Activated CD8-positive, alpha-beta T cell treated with anti-CD3 and anti-CD28 coated beads for 36 hours (primary cell): ENCODE measurements at regions of chr4 and their contacts with region 1.

Region 1: GRCh38 chr4:54233277-54233696 is 4.2 kb downstream of the PDGFRA start:
- DNase-seq: peak; percentile 83
- ATAC-seq: peak; percentile 87
- H3K4me3 Mint-ChIP-seq: peak overlapping the region; percentile 66
- H3K27ac Mint-ChIP-seq: no peak overlapping the region
- H3K4me1 Mint-ChIP-seq: peaks cover 21% of the 10 kb centered on the region
- H3K27me3 Mint-ChIP-seq: peaks cover 51% of the 10 kb centered on the region
- CTCF ChIP-seq: peak; percentile 68

Region 2: GRCh38 chr4:52376132-52376704 is 1857.1 kb before region 1 on chr4:
- CTCF ChIA-PET with region 1: interaction called, 5 read pairs
- POLR2A ChIA-PET with region 1: no interaction called
- intact Hi-C with region 1: loop called (anchors 10 kb)
- DNase-seq: peak; percentile 30
- ATAC-seq: no peak
- H3K4me3 Mint-ChIP-seq: no peak overlapping the region
- H3K27ac Mint-ChIP-seq: no peak overlapping the region
- H3K4me1 Mint-ChIP-seq: no peaks in the 10 kb centered on the region
- H3K27me3 Mint-ChIP-seq: peaks cover 7% of the 10 kb centered on the region
- CTCF ChIP-seq: peak; percentile 87

Region 3: GRCh38 chr4:53196882-53197771 is 1036.2 kb before region 1 on chr4:
- CTCF ChIA-PET with region 1: interaction called, 16 read pairs
- POLR2A ChIA-PET with region 1: no interaction called
- intact Hi-C with region 1: loop called (anchors 10 kb)
- DNase-seq: no peak
- ATAC-seq: no peak
- H3K4me3 Mint-ChIP-seq: no peak overlapping the region
- H3K27ac Mint-ChIP-seq: no peak overlapping the region
- H3K4me1 Mint-ChIP-seq: no peaks in the 10 kb centered on the region
- H3K27me3 Mint-ChIP-seq: no peaks in the 10 kb centered on the region
- CTCF ChIP-seq: peak; percentile 83

Region 4: DNA sequence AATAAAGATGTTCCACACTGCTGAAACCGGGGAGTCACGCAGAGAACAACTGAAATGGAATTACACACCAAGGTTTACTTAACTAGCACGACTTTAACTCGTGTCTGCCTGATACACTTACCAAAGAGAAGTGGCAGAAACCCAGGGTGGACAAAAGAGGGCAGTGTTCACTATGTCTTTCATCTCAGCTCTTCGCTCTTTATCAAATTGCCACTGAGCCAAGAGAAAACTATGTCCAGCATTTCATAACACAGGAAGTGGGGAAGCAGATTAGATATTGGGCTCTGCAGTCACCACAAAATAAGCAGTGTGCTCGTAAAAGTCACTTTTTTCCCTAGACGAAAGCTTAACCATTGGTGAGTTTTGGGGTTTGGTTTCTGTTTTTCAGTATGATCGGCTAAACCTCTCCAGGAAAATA is 324.6 kb before region 1 on chr4:
- CTCF ChIA-PET with region 1: interaction called, 114 read pairs
- POLR2A ChIA-PET with region 1: no interaction called
- intact Hi-C with region 1: loop called (anchors 5 kb)
- DNase-seq: peak; percentile 28
- ATAC-seq: peak; percentile 66
- H3K4me3 Mint-ChIP-seq: no peak overlapping the region
- H3K27ac Mint-ChIP-seq: no peak overlapping the region
- H3K4me1 Mint-ChIP-seq: peaks cover 11% of the 10 kb centered on the region
- H3K27me3 Mint-ChIP-seq: peaks cover 44% of the 10 kb centered on the region
- CTCF ChIP-seq: peak; percentile 53

Region 5: GRCh38 chr4:53920116-53920515 is 313.2 kb before region 1 on chr4:
- CTCF ChIA-PET with region 1: interaction called, 101 read pairs
- POLR2A ChIA-PET with region 1: interaction called, 3 read pairs
- intact Hi-C with region 1: no loop called
- DNase-seq: no peak
- ATAC-seq: no peak
- H3K4me3 Mint-ChIP-seq: no peak overlapping the region
- H3K27ac Mint-ChIP-seq: no peak overlapping the region
- H3K4me1 Mint-ChIP-seq: no peaks in the 10 kb centered on the region
- H3K27me3 Mint-ChIP-seq: peaks cover 4% of the 10 kb centered on the region
- CTCF ChIP-seq: no peak

Region 6: GRCh38 chr4:53962516-53963225 is 270.6 kb before region 1 on chr4:
- CTCF ChIA-PET with region 1: interaction called, 11 read pairs
- POLR2A ChIA-PET with region 1: no interaction called
- intact Hi-C with region 1: no loop called
- DNase-seq: no peak
- ATAC-seq: no peak
- H3K4me3 Mint-ChIP-seq: no peak overlapping the region
- H3K27ac Mint-ChIP-seq: no peak overlapping the region
- H3K4me1 Mint-ChIP-seq: no peaks in the 10 kb centered on the region
- H3K27me3 Mint-ChIP-seq: no peaks in the 10 kb centered on the region
- CTCF ChIP-seq: no peak

Region 7: DNA sequence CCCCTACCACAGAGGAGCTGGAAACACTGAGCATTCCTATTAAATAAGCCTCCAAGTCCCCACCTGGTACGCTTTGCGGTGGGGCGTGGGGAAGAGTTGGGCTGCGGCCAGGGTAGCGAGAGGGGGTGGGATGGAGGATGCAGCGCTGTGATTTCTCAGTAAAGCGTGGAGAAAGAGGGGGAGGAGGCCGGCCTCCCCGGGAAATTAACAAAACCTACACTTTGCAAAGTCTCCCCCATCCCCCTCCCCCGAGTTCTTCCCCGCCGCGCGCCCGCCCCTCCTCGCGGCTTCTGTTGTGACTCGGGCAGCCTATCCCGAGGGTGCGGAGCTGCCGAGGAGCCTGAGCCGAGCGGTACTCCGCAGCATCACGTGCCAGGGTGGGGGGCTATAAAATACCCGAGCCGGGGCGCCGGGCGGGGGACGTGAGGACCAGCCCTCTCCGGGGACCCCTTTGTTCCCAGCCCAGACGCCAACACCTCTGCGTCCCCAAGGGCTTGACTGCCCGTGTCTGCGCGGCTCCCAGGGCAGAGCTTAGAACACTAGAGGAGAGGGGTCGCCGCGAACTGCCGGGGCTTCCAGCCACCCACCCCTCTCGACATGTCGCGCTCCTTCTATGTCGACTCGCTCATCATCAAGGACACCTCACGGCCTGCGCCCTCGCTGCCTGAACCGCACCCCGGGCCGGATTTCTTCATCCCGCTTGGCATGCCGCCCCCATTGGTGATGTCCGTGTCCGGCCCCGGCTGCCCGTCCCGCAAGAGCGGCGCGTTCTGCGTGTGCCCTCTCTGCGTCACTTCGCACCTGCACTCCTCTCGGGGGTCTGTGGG is 133.3 kb before region 1 on chr4 and contains the start of gene GSX2:
- CTCF ChIA-PET with region 1: interaction called, 27 read pairs
- POLR2A ChIA-PET with region 1: interaction called, 3 read pairs
- intact Hi-C with region 1: loop called (anchors 5 kb)
- DNase-seq: no peak
- ATAC-seq: peak; percentile 28
- H3K4me3 Mint-ChIP-seq: peak within 1 kb of the TSS; percentile 59
- H3K27ac Mint-ChIP-seq: no peak within 1 kb of the TSS
- H3K4me1 Mint-ChIP-seq: peaks cover 57% of the 10 kb centered on the region
- H3K27me3 Mint-ChIP-seq: peaks cover 89% of the 10 kb centered on the region
- CTCF ChIP-seq: no peak
- total RNA-seq, gene GSX2: not detected

Region 8: DNA sequence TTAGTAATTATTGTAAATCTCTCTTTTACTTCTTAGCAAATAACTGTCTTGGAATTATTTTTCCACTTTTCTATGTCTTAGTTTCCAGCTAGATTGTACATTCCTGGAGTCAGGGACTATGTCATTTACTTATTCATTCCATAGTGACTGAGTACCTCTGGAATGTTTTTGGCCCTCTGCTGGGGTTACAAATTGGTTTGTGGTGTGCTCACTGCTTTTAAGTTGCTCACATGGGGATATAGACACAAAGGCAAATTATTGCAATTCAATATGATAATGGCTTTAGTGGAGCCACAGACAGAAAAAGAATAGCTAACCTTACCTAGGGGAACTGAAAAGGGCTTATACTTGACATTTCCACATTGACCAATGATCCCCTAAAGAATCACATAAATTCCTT is 67.8 kb before region 1 on chr4:
- CTCF ChIA-PET with region 1: no interaction called
- POLR2A ChIA-PET with region 1: no interaction called
- intact Hi-C with region 1: no loop called
- DNase-seq: no peak
- ATAC-seq: no peak
- H3K4me3 Mint-ChIP-seq: no peak overlapping the region
- H3K27ac Mint-ChIP-seq: no peak overlapping the region
- H3K4me1 Mint-ChIP-seq: no peaks in the 10 kb centered on the region
- H3K27me3 Mint-ChIP-seq: peaks cover 4% of the 10 kb centered on the region
- CTCF ChIP-seq: no peak

Region 9: DNA sequence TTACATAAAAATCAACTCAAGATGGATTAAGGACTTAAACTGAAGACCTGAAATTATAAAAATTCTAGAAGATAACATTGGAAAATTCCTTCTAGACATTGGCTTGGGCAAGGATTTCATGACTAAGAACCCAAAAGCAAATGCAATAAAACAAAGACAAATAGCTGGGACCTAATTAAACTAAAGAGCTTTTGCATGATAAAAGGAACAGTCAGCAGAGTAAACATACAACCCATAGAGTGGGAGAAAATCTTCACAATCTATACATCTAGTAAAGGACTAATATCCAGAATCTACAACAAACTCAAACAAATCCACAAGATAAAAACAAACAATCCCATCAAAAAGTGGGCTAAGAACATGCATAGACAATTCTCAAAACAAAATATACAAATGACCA is 113.2 kb after region 1 on chr4:
- CTCF ChIA-PET with region 1: no interaction called
- POLR2A ChIA-PET with region 1: no interaction called
- intact Hi-C with region 1: no loop called
- DNase-seq: no peak
- ATAC-seq: no peak
- H3K4me3 Mint-ChIP-seq: no peak overlapping the region
- H3K27ac Mint-ChIP-seq: no peak overlapping the region
- H3K4me1 Mint-ChIP-seq: no peaks in the 10 kb centered on the region
- H3K27me3 Mint-ChIP-seq: peaks cover 10% of the 10 kb centered on the region
- CTCF ChIP-seq: no peak